PC-9 (cell line): ENCODE measurements at regions of chr14 and their contacts with region 1.

Region 1: DNA sequence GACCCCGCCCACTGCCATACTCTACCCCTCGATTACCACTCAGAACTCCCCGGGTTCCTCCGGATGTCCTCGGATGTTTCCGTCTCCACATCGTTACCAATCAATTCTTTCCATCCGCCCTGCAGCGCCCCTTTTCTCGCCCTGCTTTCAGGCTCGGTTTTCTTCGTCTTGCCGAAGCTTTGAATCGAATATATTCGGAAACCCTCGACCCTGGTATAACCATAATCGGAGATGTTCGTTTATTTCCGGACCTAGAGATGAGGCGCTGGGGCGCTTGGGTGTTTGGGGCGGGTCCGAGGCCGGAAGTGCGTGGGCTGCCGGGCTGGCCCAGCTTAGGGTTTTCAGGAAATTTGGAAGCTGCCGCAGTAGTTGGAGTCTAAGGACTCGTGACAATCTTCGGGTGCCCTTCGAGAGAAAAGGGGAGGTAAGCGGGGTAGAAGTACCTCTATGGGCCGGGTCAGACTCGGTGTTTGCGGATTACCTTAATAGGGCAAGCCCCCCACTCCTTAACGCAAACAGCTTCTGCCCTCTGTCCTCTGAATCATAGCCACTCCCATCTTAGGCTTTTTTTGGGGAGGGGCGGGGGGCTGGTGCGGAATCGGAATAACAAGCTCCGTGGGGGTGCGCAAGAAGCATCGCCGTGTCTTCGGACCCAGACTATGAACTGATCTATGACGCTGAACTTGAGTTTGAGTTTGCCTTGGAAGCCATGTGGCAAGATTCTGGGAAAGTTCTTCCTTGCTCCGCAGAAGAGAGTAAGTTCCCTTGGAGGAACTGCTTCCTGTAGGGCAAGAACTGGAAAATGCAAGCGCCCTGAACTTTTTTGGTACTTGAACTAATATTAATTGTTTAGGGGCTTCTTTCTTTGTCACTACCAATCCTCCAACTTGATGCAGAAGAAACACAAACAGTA is at the start of gene C14orf119:
- DNase-seq: peak; percentile 96
- H3K4me3 ChIP-seq: peak within 1 kb of the TSS; percentile 98
- H3K27ac ChIP-seq: peak within 1 kb of the TSS; percentile 89
- H3K4me1 ChIP-seq: peaks cover 25% of the 10 kb centered on the region
- H3K27me3 ChIP-seq: no peaks in the 10 kb centered on the region
- CTCF ChIP-seq: no peak
- total RNA-seq, gene C14orf119: 26.8 and 46.5 TPM in 2 replicates

Region 2: GRCh38 chr14:22929104-22929847 is 166.2 kb before region 1 on chr14 and contains the start of gene PRMT5:
- CTCF ChIA-PET with region 1: no interaction called
- POLR2A ChIA-PET with region 1: interaction called, 11 read pairs
- intact Hi-C with region 1: no loop called
- DNase-seq: peak; percentile 94 to 98
- H3K4me3 ChIP-seq: peak within 1 kb of the TSS; percentile 85
- H3K27ac ChIP-seq: peak within 1 kb of the TSS; percentile 42
- H3K4me1 ChIP-seq: peaks cover 32% of the 10 kb centered on the region
- H3K27me3 ChIP-seq: no peaks in the 10 kb centered on the region
- CTCF ChIP-seq: no peak
- total RNA-seq, gene PRMT5: 58.6 and 73.2 TPM in 2 replicates

Region 3: GRCh38 chr14:23076785-23077408 is 18.6 kb before region 1 on chr14:
- CTCF ChIA-PET with region 1: interaction called, 7 read pairs
- POLR2A ChIA-PET with region 1: interaction called, 10 read pairs
- intact Hi-C with region 1: loop called (anchors 2 kb)
- DNase-seq: no peak
- H3K4me3 ChIP-seq: no peak overlapping the region
- H3K27ac ChIP-seq: peak overlapping the region; percentile 92
- H3K4me1 ChIP-seq: peaks cover 69% of the 10 kb centered on the region
- H3K27me3 ChIP-seq: no peaks in the 10 kb centered on the region
- CTCF ChIP-seq: peak; percentile 76

Region 4: DNA sequence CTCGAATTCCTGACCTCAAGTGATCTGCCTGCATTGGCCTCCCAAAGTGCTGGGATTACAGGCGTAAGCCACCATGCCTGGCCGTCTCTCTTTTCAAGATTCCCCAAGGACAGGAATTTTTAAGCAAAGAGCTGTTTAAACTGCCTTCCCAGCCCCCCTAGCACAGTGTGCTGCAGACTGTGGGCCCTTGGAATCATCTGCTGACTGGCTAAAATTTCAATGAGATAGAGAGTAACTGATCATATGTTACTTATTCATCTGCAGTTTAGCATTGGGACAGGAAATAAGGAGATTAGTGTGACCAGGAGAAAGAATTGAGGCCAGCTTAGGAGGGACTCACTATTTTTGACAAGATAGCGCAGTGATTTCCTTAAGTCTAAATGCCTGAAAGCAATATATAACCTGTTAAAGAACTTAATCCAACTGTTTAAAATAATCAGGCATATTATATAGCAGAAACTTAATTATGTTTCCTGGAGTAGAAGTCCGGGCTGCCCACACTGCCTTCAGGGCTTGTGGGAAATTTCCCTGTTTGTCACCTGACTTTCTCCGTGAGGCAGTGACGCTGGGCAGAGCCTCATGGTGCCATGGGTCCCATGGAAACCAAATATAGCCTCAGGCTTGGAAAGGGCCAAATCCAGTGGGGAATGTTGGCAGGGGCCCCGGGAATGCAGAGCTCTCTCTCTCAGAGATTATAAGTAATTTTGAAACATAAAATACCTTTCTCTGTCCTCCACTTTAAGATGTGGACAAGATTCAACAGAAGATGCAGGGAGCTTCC is 46.4 kb after region 1 on chr14:
- CTCF ChIA-PET with region 1: no interaction called
- POLR2A ChIA-PET with region 1: interaction called, 11 read pairs
- intact Hi-C with region 1: no loop called
- DNase-seq: peak; percentile 72 to 74
- H3K4me3 ChIP-seq: no peak overlapping the region
- H3K27ac ChIP-seq: peak overlapping the region; percentile 46
- H3K4me1 ChIP-seq: peaks cover 36% of the 10 kb centered on the region
- H3K27me3 ChIP-seq: no peaks in the 10 kb centered on the region
- CTCF ChIP-seq: no peak

Region 5: GRCh38 chr14:23605931-23606585 is 510.6 kb after region 1 on chr14:
- CTCF ChIA-PET with region 1: no interaction called
- POLR2A ChIA-PET with region 1: no interaction called
- intact Hi-C with region 1: no loop called
- DNase-seq: no peak
- H3K4me3 ChIP-seq: no peak overlapping the region
- H3K27ac ChIP-seq: no peak overlapping the region
- H3K4me1 ChIP-seq: peaks cover 13% of the 10 kb centered on the region
- H3K27me3 ChIP-seq: no peaks in the 10 kb centered on the region
- CTCF ChIP-seq: no peak